B cell (primary cell): ENCODE measurements at regions of chr6 and their contacts with region 1.

Region 1: GRCh38 chr6:90285611-90286381 is 10.8 kb downstream of the BACH2 start:
- DNase-seq: peak; percentile 87
- ATAC-seq: peak; percentile 70
- H3K4me3 ChIP-seq: peak overlapping the region; percentile 8 to 58 (median 32)
- H3K4me3 Mint-ChIP-seq: peak overlapping the region; percentile 73
- H3K27ac ChIP-seq: peak overlapping the region; percentile 80 to 90
- H3K27ac Mint-ChIP-seq: peak overlapping the region; percentile 85
- H3K4me1 ChIP-seq: peaks cover 78 to 90% of the 10 kb centered on the region in 2 donors
- H3K4me1 Mint-ChIP-seq: peaks cover 88% of the 10 kb centered on the region
- H3K27me3 ChIP-seq: no peaks in the 10 kb centered on the region
- H3K27me3 Mint-ChIP-seq: no peaks in the 10 kb centered on the region
- CTCF ChIP-seq: no peak

Region 2: GRCh38 chr6:89940225-89941027 is 345.4 kb before region 1 on chr6:
- CTCF ChIA-PET with region 1: interaction called, 37 read pairs
- POLR2A ChIA-PET with region 1: no interaction called
- intact Hi-C with region 1: loop called (anchors 5 kb)
- DNase-seq: peak; percentile 68
- ATAC-seq: peak; percentile 81
- H3K4me3 ChIP-seq: no peak overlapping the region
- H3K4me3 Mint-ChIP-seq: no peak overlapping the region
- H3K27ac ChIP-seq: no peak overlapping the region
- H3K27ac Mint-ChIP-seq: peak overlapping the region; percentile 64
- H3K4me1 ChIP-seq: no peaks in the 10 kb centered on the region
- H3K4me1 Mint-ChIP-seq: peaks cover 7% of the 10 kb centered on the region
- H3K27me3 ChIP-seq: no peaks in the 10 kb centered on the region
- H3K27me3 Mint-ChIP-seq: no peaks in the 10 kb centered on the region
- CTCF ChIP-seq: peak; percentile 79

Region 3: GRCh38 chr6:90103056-90103800 is 182.6 kb before region 1 on chr6:
- CTCF ChIA-PET with region 1: no interaction called
- POLR2A ChIA-PET with region 1: no interaction called
- intact Hi-C with region 1: loop called (anchors 5 kb)
- DNase-seq: peak; percentile 71
- ATAC-seq: peak; percentile 62
- H3K4me3 ChIP-seq: peak overlapping the region in 2 of 5 experiments; percentile 6 to 40
- H3K4me3 Mint-ChIP-seq: peak overlapping the region; percentile 89
- H3K27ac ChIP-seq: peak overlapping the region in 1 of 2 donors; percentile 78
- H3K27ac Mint-ChIP-seq: peak overlapping the region; percentile 87
- H3K4me1 ChIP-seq: peaks cover 81 to 86% of the 10 kb centered on the region in 2 donors
- H3K4me1 Mint-ChIP-seq: peaks cover 92% of the 10 kb centered on the region
- H3K27me3 ChIP-seq: no peaks in the 10 kb centered on the region
- H3K27me3 Mint-ChIP-seq: no peaks in the 10 kb centered on the region
- CTCF ChIP-seq: no peak

Region 4: GRCh38 chr6:90216072-90216977 is 69.5 kb before region 1 on chr6:
- CTCF ChIA-PET with region 1: interaction called, 7 read pairs
- POLR2A ChIA-PET with region 1: no interaction called
- intact Hi-C with region 1: loop called (anchors 1 kb)
- DNase-seq: peak; percentile 95
- ATAC-seq: peak; percentile 84
- H3K4me3 ChIP-seq: no peak overlapping the region
- H3K4me3 Mint-ChIP-seq: peak overlapping the region; percentile 73
- H3K27ac ChIP-seq: peak overlapping the region; percentile 85 to 96
- H3K27ac Mint-ChIP-seq: no peak overlapping the region
- H3K4me1 ChIP-seq: peaks cover 83 to 84% of the 10 kb centered on the region in 2 donors
- H3K4me1 Mint-ChIP-seq: peaks cover 28% of the 10 kb centered on the region
- H3K27me3 ChIP-seq: no peaks in the 10 kb centered on the region
- H3K27me3 Mint-ChIP-seq: no peaks in the 10 kb centered on the region
- CTCF ChIP-seq: peak; percentile 63

Region 5: GRCh38 chr6:90274451-90275030 is 11.3 kb before region 1 on chr6:
- CTCF ChIA-PET with region 1: interaction called, 25 read pairs
- POLR2A ChIA-PET with region 1: interaction called, 7 read pairs
- intact Hi-C with region 1: loop called (anchors 1 kb)
- DNase-seq: peak; percentile 94
- ATAC-seq: peak; percentile 92
- H3K4me3 ChIP-seq: peak overlapping the region in 1 of 5 experiments; percentile 11
- H3K4me3 Mint-ChIP-seq: peak overlapping the region; percentile 59
- H3K27ac ChIP-seq: peak overlapping the region; percentile 95 to 97
- H3K27ac Mint-ChIP-seq: peak overlapping the region; percentile 87
- H3K4me1 ChIP-seq: peaks cover 55 to 75% of the 10 kb centered on the region in 2 donors
- H3K4me1 Mint-ChIP-seq: peaks cover 84% of the 10 kb centered on the region
- H3K27me3 ChIP-seq: no peaks in the 10 kb centered on the region
- H3K27me3 Mint-ChIP-seq: no peaks in the 10 kb centered on the region
- CTCF ChIP-seq: peak; percentile 34

Region 6: DNA sequence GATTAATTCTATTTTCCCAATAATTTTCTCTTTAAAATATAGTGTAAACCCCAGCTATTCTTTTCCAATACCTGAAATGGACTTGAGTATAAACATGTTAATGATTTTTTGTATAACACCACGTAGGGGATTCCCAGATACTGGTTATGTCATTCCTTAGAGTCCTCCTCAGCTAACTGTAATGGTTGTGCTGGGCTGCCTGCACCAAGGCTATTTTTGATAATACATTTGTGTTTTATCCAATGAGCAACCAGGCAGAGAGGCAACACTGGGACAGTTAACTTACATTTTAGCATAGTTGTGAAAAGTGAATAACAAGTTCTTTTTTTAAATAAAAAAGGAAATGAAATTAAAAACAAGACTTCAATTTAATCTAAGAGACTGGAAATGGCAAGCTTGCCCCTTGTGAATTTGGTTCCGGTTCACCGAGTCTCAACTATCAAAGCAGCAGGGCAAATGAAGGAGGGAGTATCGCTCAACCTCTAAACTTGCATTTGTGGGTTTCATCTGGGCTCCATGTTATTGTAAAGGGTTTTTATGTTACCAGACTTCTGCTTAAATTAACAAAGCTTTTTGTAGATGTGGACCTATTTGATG is 29.7 kb after region 1 on chr6:
- CTCF ChIA-PET with region 1: interaction called, 13 read pairs
- POLR2A ChIA-PET with region 1: interaction called, 3 read pairs
- intact Hi-C with region 1: no loop called
- DNase-seq: peak; percentile 84
- ATAC-seq: peak; percentile 85
- H3K4me3 ChIP-seq: peak overlapping the region in 3 of 5 experiments; percentile 16 to 40 (median 22)
- H3K4me3 Mint-ChIP-seq: peak overlapping the region; percentile 54
- H3K27ac ChIP-seq: peak overlapping the region; percentile 95
- H3K27ac Mint-ChIP-seq: peak overlapping the region; percentile 83
- H3K4me1 ChIP-seq: peaks cover 70 to 76% of the 10 kb centered on the region in 2 donors
- H3K4me1 Mint-ChIP-seq: peaks cover 71% of the 10 kb centered on the region
- H3K27me3 ChIP-seq: no peaks in the 10 kb centered on the region
- H3K27me3 Mint-ChIP-seq: no peaks in the 10 kb centered on the region
- CTCF ChIP-seq: no peak

Region 7: DNA sequence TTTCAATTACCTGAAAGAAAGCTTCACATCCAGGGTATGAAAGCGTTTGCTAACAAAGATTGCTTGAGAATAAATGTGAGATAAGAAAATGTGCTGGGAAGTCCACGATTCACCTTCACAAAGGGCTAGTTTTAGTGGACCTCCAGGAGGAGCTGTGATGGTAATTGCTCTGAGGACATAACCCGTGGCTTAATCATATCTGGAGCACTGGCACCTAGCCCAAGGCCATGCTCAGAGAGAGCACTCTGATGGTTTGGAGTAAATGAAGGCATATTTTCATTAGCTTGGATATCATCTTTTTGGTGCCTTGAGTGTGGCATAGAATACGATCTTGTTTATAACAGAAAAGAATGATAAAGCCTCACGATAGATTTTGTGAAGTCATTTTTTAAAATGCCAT is 57.8 kb after region 1 on chr6:
- CTCF ChIA-PET with region 1: no interaction called
- POLR2A ChIA-PET with region 1: no interaction called
- intact Hi-C with region 1: no loop called
- DNase-seq: no peak
- ATAC-seq: no peak
- H3K4me3 ChIP-seq: no peak overlapping the region
- H3K4me3 Mint-ChIP-seq: no peak overlapping the region
- H3K27ac ChIP-seq: no peak overlapping the region
- H3K27ac Mint-ChIP-seq: no peak overlapping the region
- H3K4me1 ChIP-seq: no peaks in the 10 kb centered on the region
- H3K4me1 Mint-ChIP-seq: no peaks in the 10 kb centered on the region
- H3K27me3 ChIP-seq: no peaks in the 10 kb centered on the region
- H3K27me3 Mint-ChIP-seq: no peaks in the 10 kb centered on the region
- CTCF ChIP-seq: no peak

Region 8: GRCh38 chr6:90383196-90383822 is 97.5 kb after region 1 on chr6:
- CTCF ChIA-PET with region 1: interaction called, 11 read pairs
- POLR2A ChIA-PET with region 1: no interaction called
- intact Hi-C with region 1: loop called (anchors 1 kb)
- DNase-seq: peak; percentile 86
- ATAC-seq: peak; percentile 84
- H3K4me3 ChIP-seq: peak overlapping the region in 2 of 5 experiments; percentile 19 to 50
- H3K4me3 Mint-ChIP-seq: peak overlapping the region; percentile 78
- H3K27ac ChIP-seq: peak overlapping the region; percentile 65 to 93
- H3K27ac Mint-ChIP-seq: peak overlapping the region; percentile 92
- H3K4me1 ChIP-seq: peaks cover 72 to 74% of the 10 kb centered on the region in 2 donors
- H3K4me1 Mint-ChIP-seq: peaks cover 79% of the 10 kb centered on the region
- H3K27me3 ChIP-seq: no peaks in the 10 kb centered on the region
- H3K27me3 Mint-ChIP-seq: no peaks in the 10 kb centered on the region
- CTCF ChIP-seq: no peak